ENCODE measurements at regions of chr3 and their contacts with region 1.

Region 1: DNA sequence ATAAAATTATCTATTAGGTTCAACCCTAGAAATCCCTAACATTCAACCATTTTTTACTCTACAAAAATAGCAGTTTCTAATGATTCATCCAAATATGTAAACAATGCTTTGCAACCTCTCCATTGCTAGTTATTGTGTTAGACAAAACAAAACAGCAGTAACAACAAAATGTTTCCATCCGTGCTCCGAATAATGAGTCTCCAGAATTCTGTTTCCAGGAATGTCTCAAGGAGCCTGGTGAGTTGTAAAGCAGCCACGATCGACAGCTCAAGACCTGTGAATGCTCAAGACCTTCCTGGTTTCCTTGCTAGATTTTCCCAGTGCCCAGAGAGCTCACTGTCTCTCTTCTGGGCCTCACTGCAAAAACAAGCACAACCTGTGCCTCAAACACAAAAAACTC is 49.9 kb downstream of the CHRD start:
- DNase-seq: no peak
- ATAC-seq: no peak
- H3K4me3 ChIP-seq: no peak overlapping the region
- H3K27ac ChIP-seq: no peak overlapping the region
- H3K4me1 ChIP-seq: no peaks in the 10 kb centered on the region
- H3K27me3 ChIP-seq: no peaks in the 10 kb centered on the region
- CTCF ChIP-seq: no peak

Region 2: DNA sequence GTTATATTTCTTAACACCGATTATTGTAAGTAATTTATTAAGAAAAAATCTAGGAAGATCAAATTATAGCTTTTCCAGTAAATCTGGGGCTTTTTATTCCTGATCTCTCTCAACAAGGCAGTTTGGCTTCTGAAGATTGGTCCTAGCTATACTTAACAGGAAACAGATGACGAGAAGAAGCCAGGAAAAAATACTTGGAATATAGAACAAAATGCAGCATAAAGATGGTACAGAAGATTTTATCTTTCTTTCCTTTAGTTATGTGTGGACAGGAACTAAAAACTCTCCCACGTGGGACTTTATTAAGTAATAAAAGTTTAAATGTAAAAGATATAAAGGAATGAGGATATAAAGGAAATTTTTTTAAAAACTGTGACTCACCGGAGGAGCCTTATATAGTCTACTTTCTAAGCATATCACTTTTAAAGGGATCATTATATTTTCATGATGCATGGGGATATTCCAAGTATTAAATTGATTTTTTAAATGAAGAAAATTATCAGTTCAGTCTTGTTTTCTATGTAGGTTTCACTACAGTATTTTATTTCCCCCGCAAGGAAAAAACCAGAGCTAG is 1168.5 kb before region 1 on chr3:
- CTCF ChIA-PET with region 1: no interaction called
- POLR2A ChIA-PET with region 1: interaction called, 10 read pairs
- in situ Hi-C with region 1: no loop called
- intact Hi-C with region 1: no loop called
- DNase-seq: no peak
- ATAC-seq: no peak
- H3K4me3 ChIP-seq: no peak overlapping the region
- H3K27ac ChIP-seq: no peak overlapping the region
- H3K4me1 ChIP-seq: peaks cover 46% of the 10 kb centered on the region
- H3K27me3 ChIP-seq: no peaks in the 10 kb centered on the region
- CTCF ChIP-seq: no peak